ENCODE measurements at regions of chr6 and their contacts with region 1.

Region 1: DNA sequence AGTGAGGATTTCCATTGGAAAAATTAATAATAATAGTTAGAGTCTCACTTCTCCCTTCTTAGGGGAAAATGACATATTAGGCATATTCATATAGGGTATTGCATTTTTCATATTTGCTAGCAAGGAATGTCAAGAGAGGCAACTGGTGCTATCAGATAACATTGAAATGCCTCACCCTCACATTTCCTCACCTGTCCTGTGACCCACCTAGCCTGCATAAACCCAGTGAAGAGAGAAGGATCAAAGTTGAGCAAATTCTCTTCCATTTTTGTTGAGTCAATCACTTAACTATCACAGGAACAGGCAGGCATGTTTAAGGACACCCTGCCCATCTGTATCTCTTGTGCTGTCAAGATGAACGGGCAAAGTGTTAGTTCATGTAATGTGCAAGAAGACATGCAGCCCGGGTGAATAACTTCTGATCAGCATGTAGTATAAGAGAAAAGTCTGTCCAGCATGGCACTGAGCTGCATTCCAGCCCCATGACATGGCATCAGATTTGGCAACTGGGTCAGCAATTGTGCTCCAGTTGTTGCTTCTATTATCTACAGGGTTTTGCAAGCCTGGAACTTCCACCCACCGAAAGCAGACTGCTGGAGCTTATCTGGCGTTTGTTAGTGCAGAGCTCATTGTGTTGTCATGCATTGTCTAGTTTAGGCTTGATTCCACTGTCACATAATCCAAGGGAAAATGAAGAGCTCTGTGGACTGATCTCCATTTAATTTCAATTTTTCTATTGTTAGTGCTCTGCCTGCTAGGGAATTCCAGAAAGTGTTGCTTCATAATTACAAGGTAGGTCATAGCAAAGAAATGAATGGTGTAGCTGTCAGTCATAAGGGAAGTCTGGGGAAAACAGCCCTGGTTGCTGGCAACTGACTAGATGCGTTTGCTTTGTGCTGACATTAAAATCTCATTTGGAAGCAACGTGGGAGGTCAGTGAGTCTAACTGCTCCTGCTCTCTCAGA is 138.4 kb upstream of the TNFAIP3 start:
- DNase-seq: peak; percentile 95
- H3K4me3 Mint-ChIP-seq: peak overlapping the region; percentile 22
- H3K27ac Mint-ChIP-seq: peak overlapping the region; percentile 73
- H3K4me1 Mint-ChIP-seq: peaks cover 37% of the 10 kb centered on the region
- H3K27me3 Mint-ChIP-seq: no peaks in the 10 kb centered on the region
- CTCF ChIP-seq: no peak

Region 2: GRCh38 chr6:137707590-137708360 is 20.9 kb before region 1 on chr6:
- CTCF ChIA-PET with region 1: interaction called, 10 read pairs
- POLR2A ChIA-PET with region 1: interaction called, 7 read pairs
- intact Hi-C with region 1: no loop called
- DNase-seq: peak; percentile 88
- H3K4me3 Mint-ChIP-seq: peak overlapping the region; percentile 60
- H3K27ac Mint-ChIP-seq: peak overlapping the region; percentile 67
- H3K4me1 Mint-ChIP-seq: peaks cover 14% of the 10 kb centered on the region
- H3K27me3 Mint-ChIP-seq: no peaks in the 10 kb centered on the region
- CTCF ChIP-seq: peak; percentile 64

Region 3: DNA sequence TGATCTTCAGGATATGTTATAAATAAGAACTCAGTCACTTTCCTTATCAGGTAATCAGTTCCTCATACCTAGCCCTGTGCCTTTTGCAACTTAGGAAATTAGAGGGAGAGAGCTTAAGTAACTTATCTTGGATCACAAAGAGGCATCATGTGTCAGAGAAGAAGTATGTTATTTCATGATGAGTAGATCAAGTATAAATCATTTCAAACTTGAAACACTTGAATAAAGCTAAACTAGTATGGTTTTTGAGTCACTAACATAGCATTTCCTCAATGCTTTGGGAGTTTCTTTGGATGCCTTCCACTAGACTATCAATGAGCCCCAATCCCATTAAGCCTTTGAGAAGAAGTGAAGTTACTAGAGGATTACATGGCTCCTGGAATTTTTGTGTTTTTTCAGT is 35.8 kb after region 1 on chr6:
- CTCF ChIA-PET with region 1: no interaction called
- POLR2A ChIA-PET with region 1: interaction called, 5 read pairs
- intact Hi-C with region 1: loop called (anchors 1 kb)
- DNase-seq: peak; percentile 17
- H3K4me3 Mint-ChIP-seq: no peak overlapping the region
- H3K27ac Mint-ChIP-seq: peak overlapping the region; percentile 71
- H3K4me1 Mint-ChIP-seq: peaks cover 29% of the 10 kb centered on the region
- H3K27me3 Mint-ChIP-seq: no peaks in the 10 kb centered on the region
- CTCF ChIP-seq: no peak

Region 4: DNA sequence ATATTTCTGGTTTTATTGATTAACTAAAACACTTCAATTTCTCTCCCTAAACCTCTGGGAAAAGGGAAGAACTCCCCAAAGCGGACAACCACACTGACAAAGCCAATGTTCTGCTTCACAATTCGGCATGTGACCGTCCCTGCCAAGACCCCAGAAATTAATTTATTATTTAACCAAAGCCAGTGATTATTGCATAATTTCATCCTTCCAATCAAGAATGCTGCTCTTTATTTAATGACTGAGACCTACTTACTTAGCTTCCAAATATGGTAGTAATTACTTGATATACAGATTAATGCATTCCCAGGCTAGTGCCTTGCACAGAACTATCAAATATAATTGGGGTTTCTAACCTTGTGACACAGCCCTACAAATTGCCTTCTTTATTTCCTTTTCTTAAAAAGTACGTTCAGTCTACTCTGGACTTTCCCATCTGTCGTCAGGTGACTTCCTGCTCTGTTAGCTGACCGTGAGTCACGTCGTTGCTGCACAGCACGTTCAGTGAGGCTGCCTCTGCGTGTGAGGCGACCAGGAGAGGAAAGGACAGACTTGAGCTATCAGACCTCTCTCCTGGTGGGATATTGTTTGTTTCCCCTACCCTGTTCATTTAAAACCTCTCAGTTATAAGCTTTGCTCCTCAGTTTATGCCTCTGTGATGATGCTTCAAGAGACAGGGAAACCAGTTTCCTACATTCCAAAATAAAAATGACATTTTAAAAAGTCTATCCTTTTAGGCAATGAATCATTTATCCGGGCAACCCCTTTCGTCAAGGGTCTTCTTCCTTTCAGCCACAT is 82.7 kb after region 1 on chr6:
- CTCF ChIA-PET with region 1: interaction called, 3 read pairs
- POLR2A ChIA-PET with region 1: interaction called, 30 read pairs
- intact Hi-C with region 1: no loop called
- DNase-seq: peak; percentile 92
- H3K4me3 Mint-ChIP-seq: peak overlapping the region; percentile 58
- H3K27ac Mint-ChIP-seq: peak overlapping the region; percentile 94
- H3K4me1 Mint-ChIP-seq: peaks cover 55% of the 10 kb centered on the region
- H3K27me3 Mint-ChIP-seq: no peaks in the 10 kb centered on the region
- CTCF ChIP-seq: no peak

Region 5: DNA sequence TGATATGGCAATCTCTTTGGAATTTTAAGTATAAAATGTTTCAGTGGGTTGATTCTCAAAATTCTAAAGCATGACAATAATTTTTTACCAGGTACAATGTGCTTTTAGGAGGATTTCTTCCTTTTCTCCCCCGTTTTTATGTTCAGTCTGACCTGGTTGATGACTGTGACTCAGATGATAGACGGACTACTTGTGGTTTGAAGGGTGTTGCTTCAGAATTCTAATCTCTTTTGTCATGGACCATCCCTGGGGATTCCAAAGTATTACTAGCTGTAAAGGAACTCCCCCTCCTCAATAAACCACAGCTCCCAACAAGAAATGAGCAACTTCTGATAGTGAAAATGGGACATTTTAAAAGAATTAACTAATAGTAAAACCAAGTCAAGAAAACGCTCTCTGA is 103.4 kb after region 1 on chr6:
- CTCF ChIA-PET with region 1: no interaction called
- POLR2A ChIA-PET with region 1: interaction called, 3 read pairs
- intact Hi-C with region 1: loop called (anchors 1 kb)
- DNase-seq: peak; percentile 76
- H3K4me3 Mint-ChIP-seq: peak overlapping the region; percentile 33
- H3K27ac Mint-ChIP-seq: peak overlapping the region; percentile 90
- H3K4me1 Mint-ChIP-seq: peaks cover 54% of the 10 kb centered on the region
- H3K27me3 Mint-ChIP-seq: no peaks in the 10 kb centered on the region
- CTCF ChIP-seq: no peak